Caco-2 (cell line): ENCODE measurements at regions of chr1 and their contacts with region 1.

Region 1: GRCh38 chr1:75203415-75204277 is 69.5 kb downstream of the LHX8 start:
- DNase-seq: peak in 1 of 2 experiments; percentile 11
- H3K4me3 ChIP-seq: no peak overlapping the region
- H3K4me3 Mint-ChIP-seq: no peak overlapping the region
- H3K27ac Mint-ChIP-seq: no peak overlapping the region
- H3K4me1 ChIP-seq: no peaks in the 10 kb centered on the region
- H3K4me1 Mint-ChIP-seq: no peaks in the 10 kb centered on the region
- H3K27me3 ChIP-seq: no peaks in the 10 kb centered on the region
- H3K27me3 Mint-ChIP-seq: no peaks in the 10 kb centered on the region
- CTCF ChIP-seq: peak; percentile 55 to 71

Region 2: GRCh38 chr1:74613894-74614293 is 589.8 kb before region 1 on chr1:
- CTCF ChIA-PET with region 1: no interaction called
- POLR2A ChIA-PET with region 1: no interaction called
- intact Hi-C with region 1: no loop called
- DNase-seq: no peak
- H3K4me3 ChIP-seq: no peak overlapping the region
- H3K4me3 Mint-ChIP-seq: no peak overlapping the region
- H3K27ac Mint-ChIP-seq: no peak overlapping the region
- H3K4me1 ChIP-seq: no peaks in the 10 kb centered on the region
- H3K4me1 Mint-ChIP-seq: no peaks in the 10 kb centered on the region
- H3K27me3 ChIP-seq: no peaks in the 10 kb centered on the region
- H3K27me3 Mint-ChIP-seq: peaks cover 1% of the 10 kb centered on the region
- CTCF ChIP-seq: no peak

Region 3: DNA sequence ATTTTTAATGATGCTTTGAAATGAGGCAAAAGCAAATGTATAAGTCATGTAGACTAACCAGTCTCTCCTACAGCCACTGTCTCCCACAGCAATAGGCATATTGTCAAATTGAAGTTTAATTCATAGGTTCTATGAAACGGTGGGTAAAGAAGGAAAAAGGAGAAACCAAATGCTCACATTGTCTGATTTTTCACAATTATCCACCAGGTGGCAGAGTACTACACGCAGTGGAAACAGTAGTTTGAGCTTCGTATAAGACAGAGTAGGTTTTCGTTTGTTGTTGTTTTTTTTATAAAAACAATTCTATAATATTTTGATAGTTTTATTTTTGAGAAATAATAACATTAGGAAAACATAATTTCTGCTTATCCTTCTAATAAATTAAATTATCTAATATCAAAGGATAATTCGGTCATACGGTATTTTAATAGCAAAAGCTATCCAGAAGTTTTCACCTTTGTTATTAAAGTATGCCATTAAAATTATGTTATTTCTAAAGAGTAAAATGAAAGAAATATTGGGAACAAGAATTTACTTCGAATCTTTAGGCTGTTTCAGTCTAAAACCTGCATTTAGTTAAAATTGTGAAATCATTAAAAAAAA is 431.6 kb before region 1 on chr1:
- CTCF ChIA-PET with region 1: no interaction called
- POLR2A ChIA-PET with region 1: no interaction called
- intact Hi-C with region 1: loop called (anchors 1 kb)
- DNase-seq: peak in 1 of 2 experiments; percentile 24
- H3K4me3 ChIP-seq: no peak overlapping the region
- H3K4me3 Mint-ChIP-seq: no peak overlapping the region
- H3K27ac Mint-ChIP-seq: no peak overlapping the region
- H3K4me1 ChIP-seq: no peaks in the 10 kb centered on the region
- H3K4me1 Mint-ChIP-seq: no peaks in the 10 kb centered on the region
- H3K27me3 ChIP-seq: no peaks in the 10 kb centered on the region
- H3K27me3 Mint-ChIP-seq: no peaks in the 10 kb centered on the region
- CTCF ChIP-seq: peak; percentile 46 to 51

Region 4: GRCh38 chr1:74995821-74996220 is 207.8 kb before region 1 on chr1:
- CTCF ChIA-PET with region 1: no interaction called
- POLR2A ChIA-PET with region 1: no interaction called
- intact Hi-C with region 1: loop called (anchors 1 kb)
- DNase-seq: no peak
- H3K4me3 ChIP-seq: no peak overlapping the region
- H3K4me3 Mint-ChIP-seq: peak overlapping the region; percentile 7
- H3K27ac Mint-ChIP-seq: no peak overlapping the region
- H3K4me1 ChIP-seq: peaks cover 20% of the 10 kb centered on the region
- H3K4me1 Mint-ChIP-seq: peaks cover 9% of the 10 kb centered on the region
- H3K27me3 ChIP-seq: no peaks in the 10 kb centered on the region
- H3K27me3 Mint-ChIP-seq: no peaks in the 10 kb centered on the region
- CTCF ChIP-seq: no peak

Region 5: DNA sequence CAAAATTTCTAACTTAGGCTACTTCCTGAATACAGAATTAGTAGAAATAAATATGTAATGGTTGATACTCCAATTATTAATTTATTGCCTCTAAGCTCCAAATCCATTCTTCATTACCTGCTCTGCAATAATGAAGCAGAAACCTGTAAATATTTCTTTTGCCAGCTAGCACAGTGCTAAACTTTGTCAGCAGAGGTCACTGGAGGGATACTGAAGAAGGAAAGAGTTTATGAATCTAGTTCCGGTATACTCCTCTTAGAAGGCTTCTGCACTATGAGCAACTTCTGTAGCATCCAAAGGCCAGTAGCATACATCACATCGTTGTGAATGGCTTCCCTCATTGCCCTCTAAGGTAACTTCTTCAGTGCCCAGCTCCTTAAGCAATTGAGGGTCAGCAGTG is 150.4 kb before region 1 on chr1:
- CTCF ChIA-PET with region 1: no interaction called
- POLR2A ChIA-PET with region 1: no interaction called
- intact Hi-C with region 1: loop called (anchors 1 kb)
- DNase-seq: peak in 1 of 2 experiments; percentile 19
- H3K4me3 ChIP-seq: no peak overlapping the region
- H3K4me3 Mint-ChIP-seq: no peak overlapping the region
- H3K27ac Mint-ChIP-seq: no peak overlapping the region
- H3K4me1 ChIP-seq: no peaks in the 10 kb centered on the region
- H3K4me1 Mint-ChIP-seq: no peaks in the 10 kb centered on the region
- H3K27me3 ChIP-seq: no peaks in the 10 kb centered on the region
- H3K27me3 Mint-ChIP-seq: peaks cover 3% of the 10 kb centered on the region
- CTCF ChIP-seq: peak; percentile 13 to 35

Region 6: GRCh38 chr1:75097654-75098053 is 106.0 kb before region 1 on chr1:
- CTCF ChIA-PET with region 1: no interaction called
- POLR2A ChIA-PET with region 1: no interaction called
- intact Hi-C with region 1: no loop called
- DNase-seq: no peak
- H3K4me3 ChIP-seq: no peak overlapping the region
- H3K4me3 Mint-ChIP-seq: no peak overlapping the region
- H3K27ac Mint-ChIP-seq: no peak overlapping the region
- H3K4me1 ChIP-seq: 0 out of 2 replicates have a peak, but pooled peaks cover 3% of the 10 kb centered on the region
- H3K4me1 Mint-ChIP-seq: no peaks in the 10 kb centered on the region
- H3K27me3 ChIP-seq: no peaks in the 10 kb centered on the region
- H3K27me3 Mint-ChIP-seq: no peaks in the 10 kb centered on the region
- CTCF ChIP-seq: no peak

Region 7: DNA sequence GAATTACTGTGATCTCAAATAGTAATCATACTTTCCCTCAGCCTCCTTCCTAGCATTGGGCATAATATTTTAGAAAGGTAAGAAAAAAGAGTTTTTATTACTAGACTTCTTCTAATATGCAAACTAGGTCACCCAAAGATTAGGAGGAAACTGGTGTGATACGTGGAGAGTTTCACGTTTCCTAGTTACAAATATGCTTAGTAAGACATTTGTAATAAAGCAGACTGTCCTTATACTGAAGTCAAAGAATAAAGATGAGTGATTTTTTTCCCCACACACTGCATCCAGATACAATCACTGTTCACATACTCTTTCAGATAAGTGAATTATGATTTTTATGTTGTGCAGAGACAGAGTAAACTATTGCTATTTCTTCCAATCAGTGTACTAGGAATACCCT is 51.6 kb before region 1 on chr1:
- CTCF ChIA-PET with region 1: no interaction called
- POLR2A ChIA-PET with region 1: no interaction called
- intact Hi-C with region 1: no loop called
- DNase-seq: no peak
- H3K4me3 ChIP-seq: no peak overlapping the region
- H3K4me3 Mint-ChIP-seq: no peak overlapping the region
- H3K27ac Mint-ChIP-seq: no peak overlapping the region
- H3K4me1 ChIP-seq: no peaks in the 10 kb centered on the region
- H3K4me1 Mint-ChIP-seq: no peaks in the 10 kb centered on the region
- H3K27me3 ChIP-seq: no peaks in the 10 kb centered on the region
- H3K27me3 Mint-ChIP-seq: peaks cover 6% of the 10 kb centered on the region
- CTCF ChIP-seq: no peak